AG04449 (cell line): ENCODE measurements at regions of chr3 and their contacts with region 1.

Region 1: DNA sequence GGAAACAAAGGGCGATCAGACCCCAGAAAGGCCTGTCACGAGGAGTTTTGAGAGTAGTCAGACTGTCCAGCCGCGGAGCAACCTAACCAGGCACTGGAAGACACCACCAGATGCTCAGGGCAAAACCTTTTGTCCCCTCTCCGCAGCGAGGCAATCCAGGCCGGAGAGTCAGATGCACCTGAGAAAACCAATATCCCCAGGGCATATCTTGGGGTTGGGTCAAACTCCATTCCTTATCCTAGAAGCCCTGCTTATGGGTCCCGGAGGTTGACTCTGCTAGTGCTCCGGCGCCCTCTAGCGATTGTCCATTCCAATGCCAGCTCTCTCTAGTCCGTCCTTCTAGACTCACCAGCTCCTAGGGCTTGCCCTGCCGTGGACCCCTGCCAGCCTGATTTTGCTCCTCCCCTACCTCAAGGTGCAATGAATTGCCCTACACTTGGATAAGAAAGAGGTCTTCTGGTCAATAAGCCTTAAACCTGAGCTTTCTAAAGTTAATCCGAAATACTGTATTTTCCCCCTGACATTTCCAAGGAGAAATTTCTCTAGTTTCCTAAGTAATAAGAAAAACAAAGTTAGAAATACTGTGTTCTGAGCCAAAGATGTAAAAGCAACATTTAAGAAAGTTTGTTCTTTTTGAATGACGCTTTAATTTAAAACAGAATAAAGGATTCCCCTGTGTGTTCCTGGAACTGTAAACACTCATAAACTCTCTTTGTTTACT is 5.5 kb downstream of the CPNE4 start:
- DNase-seq: no peak
- H3K4me3 ChIP-seq: no peak overlapping the region
- CTCF ChIP-seq: peak; percentile 96

Region 2: DNA sequence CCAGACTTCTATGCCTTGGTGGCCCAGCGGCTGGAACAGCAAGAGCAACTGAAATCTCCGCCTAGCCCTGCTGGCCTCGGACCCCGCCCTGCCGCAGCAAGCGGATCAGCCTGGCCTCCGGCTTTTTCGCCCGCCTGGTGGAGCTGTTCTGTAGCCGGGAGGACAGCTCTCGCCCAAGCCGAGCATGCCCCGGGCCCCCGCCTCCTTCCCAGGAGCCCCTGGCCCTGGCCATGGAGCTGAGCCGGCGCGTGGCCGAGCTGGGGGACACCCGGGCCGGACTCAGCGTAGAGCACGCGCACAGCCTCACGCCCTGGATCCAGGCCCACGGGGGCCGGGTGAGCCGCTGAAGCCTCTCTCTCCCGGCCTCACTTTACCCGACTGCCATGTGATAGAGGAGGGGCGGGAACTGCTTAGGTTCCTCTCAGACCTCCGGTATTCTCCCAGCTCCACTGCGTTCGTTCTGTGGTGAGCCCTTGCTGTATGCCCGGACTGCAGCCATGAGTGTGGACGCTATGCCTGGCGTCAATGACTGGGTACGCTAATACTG is 502.5 kb before region 1 on chr3:
- CTCF ChIA-PET with region 1: interaction called, 12 read pairs
- POLR2A ChIA-PET with region 1: no interaction called
- DNase-seq: no peak
- H3K4me3 ChIP-seq: peak overlapping the region; percentile 52
- CTCF ChIP-seq: peak; percentile 76

Region 3: GRCh38 chr3:131549340-131549739 is 480.0 kb before region 1 on chr3:
- CTCF ChIA-PET with region 1: interaction called, 10 read pairs
- POLR2A ChIA-PET with region 1: no interaction called
- DNase-seq: no peak
- H3K4me3 ChIP-seq: no peak overlapping the region
- CTCF ChIP-seq: peak; percentile 15

Region 4: DNA sequence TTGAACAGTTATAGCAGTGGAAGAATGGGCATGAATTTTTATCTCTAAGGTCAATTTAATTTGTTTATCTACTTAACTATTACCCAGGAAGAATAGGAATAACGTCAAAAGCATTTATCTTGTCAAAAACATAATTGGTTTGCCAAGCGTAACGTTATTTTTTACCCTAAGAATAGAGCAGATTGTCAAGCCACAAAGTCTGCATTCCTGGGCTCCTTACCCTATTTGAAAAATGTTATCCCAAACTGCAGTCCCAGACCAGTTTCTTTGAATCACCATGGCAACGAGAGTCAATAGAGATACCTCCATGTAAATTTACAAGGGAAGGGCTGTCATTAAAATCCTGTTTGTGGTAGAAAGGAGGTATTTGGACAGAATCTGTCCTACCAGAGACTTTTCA is 55.6 kb before region 1 on chr3:
- CTCF ChIA-PET with region 1: no interaction called
- POLR2A ChIA-PET with region 1: no interaction called
- DNase-seq: no peak
- H3K4me3 ChIP-seq: no peak overlapping the region
- CTCF ChIP-seq: no peak

Region 5: DNA sequence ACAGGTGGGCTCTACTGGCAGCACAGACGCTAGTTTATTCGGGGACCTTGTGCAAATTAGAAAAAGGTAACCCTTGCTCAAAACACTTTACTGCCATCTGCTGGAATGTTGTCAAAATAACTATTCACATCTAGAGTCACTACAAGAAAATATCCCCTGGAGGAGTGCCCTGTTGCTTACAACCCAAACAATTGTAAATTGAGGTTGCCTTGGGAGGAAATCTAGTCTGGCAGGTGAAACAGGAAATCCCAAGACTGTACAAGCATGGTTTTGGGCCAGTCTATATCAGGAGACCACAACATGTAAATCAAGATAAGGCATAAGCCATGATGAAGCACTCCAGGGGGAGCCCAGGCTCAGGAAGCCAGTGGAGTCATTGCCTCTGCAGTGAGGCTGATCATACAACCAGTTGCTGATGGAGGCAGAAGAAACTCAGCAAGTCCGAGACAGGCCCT is 151.0 kb after region 1 on chr3:
- CTCF ChIA-PET with region 1: interaction called, 454 read pairs
- POLR2A ChIA-PET with region 1: no interaction called
- DNase-seq: peak; percentile 7
- H3K4me3 ChIP-seq: no peak overlapping the region
- CTCF ChIP-seq: peak; percentile 24